ENCODE measurements at regions of chr3 and their contacts with region 1.

Region 1: DNA sequence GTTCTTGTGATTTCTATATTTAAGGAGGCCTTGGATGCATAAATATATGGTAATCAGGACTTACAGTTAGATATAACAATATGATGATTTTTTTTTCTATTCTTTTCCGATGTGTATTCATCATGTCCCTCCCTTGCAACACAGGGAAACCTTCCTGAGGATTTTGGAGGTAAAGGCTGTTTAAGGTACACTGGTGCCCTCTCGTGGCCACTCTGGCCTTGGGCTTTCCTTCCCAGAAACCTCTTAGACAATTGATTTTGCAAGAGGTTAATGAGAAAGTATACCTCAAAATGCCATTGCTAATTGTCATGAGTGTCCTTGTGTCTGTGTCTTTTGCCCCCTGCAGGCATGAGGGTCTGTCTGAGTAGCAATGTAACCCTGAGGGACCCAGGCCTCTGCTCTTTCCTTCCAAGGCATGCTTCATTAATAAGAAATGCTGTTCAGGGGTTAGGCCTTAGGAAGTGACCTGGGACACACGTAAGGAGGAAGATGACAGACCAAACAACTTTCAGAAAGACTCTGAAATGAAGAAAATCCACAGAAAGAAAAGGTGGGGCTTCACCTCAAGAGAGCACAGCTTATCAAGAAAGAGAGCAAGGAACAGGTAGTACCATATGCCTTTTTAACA is 70.3 kb upstream of the PPP2R3A start:
- DNase-seq: peak; percentile 70
- H3K4me3 ChIP-seq: no peak overlapping the region
- H3K27ac ChIP-seq: no peak overlapping the region
- H3K4me1 ChIP-seq: no peaks in the 10 kb centered on the region
- H3K27me3 ChIP-seq: no peaks in the 10 kb centered on the region
- CTCF ChIP-seq: peak; percentile 70 to 77 (median 75)
- EP300 ChIP-seq: no peak
- POLR2A ChIP-seq: no peak

Region 2: GRCh38 chr3:134464064-134464697 is 1431.0 kb before region 1 on chr3:
- in situ Hi-C with region 1: no loop called
- intact Hi-C with region 1: loop called (anchors 5 kb)
- DNase-seq: peak; percentile 58
- H3K4me3 ChIP-seq: no peak overlapping the region
- H3K27ac ChIP-seq: peak overlapping the region; percentile 67 to 83 (median 77)
- H3K4me1 ChIP-seq: peaks cover 4 to 23% (median 6%) of the 10 kb centered on the region in 4 donors
- H3K27me3 ChIP-seq: no peaks in the 10 kb centered on the region
- CTCF ChIP-seq: no peak
- EP300 ChIP-seq: no peak
- POLR2A ChIP-seq: no peak

Region 3: GRCh38 chr3:134600685-134601463 is 1294.3 kb before region 1 on chr3:
- in situ Hi-C with region 1: loop called in 2 of 4 experiments (anchors 10 to 25 kb)
- intact Hi-C with region 1: loop called (anchors 2 kb)
- DNase-seq: peak; percentile 44
- H3K4me3 ChIP-seq: no peak overlapping the region
- H3K27ac ChIP-seq: no peak overlapping the region
- H3K4me1 ChIP-seq: peaks cover 0 to 2% (median 0%) of the 10 kb centered on the region in 4 donors
- H3K27me3 ChIP-seq: no peaks in the 10 kb centered on the region
- CTCF ChIP-seq: peak; percentile 80 to 96 (median 92)
- EP300 ChIP-seq: no peak
- POLR2A ChIP-seq: no peak

Region 4: GRCh38 chr3:134794950-134795745 is 1100.1 kb before region 1 on chr3 and contains the start of gene EPHB1:
- in situ Hi-C with region 1: loop called in 3 of 4 experiments (anchors 25 kb)
- intact Hi-C with region 1: loop called (anchors 10 kb)
- DNase-seq: peak; percentile 70
- H3K4me3 ChIP-seq: peak within 1 kb of the TSS; percentile 17 to 54 (median 26)
- H3K27ac ChIP-seq: peak within 1 kb of the TSS in 2 of 4 donors; percentile 28 to 75
- H3K4me1 ChIP-seq: peaks cover 0 to 18% (median 13%) of the 10 kb centered on the region in 4 donors
- H3K27me3 ChIP-seq: peaks cover 32% of the 10 kb centered on the region
- CTCF ChIP-seq: peak; percentile 76 to 86 (median 78)
- EP300 ChIP-seq: no peak
- POLR2A ChIP-seq: no peak
- total RNA-seq, gene EPHB1: 0.82 to 2.2 (median 1.2) TPM

Region 5: GRCh38 chr3:135736740-135737139 is 158.5 kb before region 1 on chr3:
- in situ Hi-C with region 1: loop called in 1 of 4 experiments (anchors 5 kb)
- intact Hi-C with region 1: no loop called
- DNase-seq: peak; percentile 38
- H3K4me3 ChIP-seq: no peak overlapping the region
- H3K27ac ChIP-seq: no peak overlapping the region
- H3K4me1 ChIP-seq: no peaks in the 10 kb centered on the region
- H3K27me3 ChIP-seq: no peaks in the 10 kb centered on the region
- CTCF ChIP-seq: peak in 4 of 5 experiments; percentile 24 to 49 (median 38)
- EP300 ChIP-seq: no peak
- POLR2A ChIP-seq: no peak